ENCODE measurements at regions of chr7 and their contacts with region 1.

Region 1: GRCh38 chr7:50304158-50304910 is at the start of gene IKZF1:
- DNase-seq: no peak
- ATAC-seq: peak; percentile 41
- H3K4me3 ChIP-seq: peak within 1 kb of the TSS; percentile 79
- H3K27ac ChIP-seq: peak within 1 kb of the TSS; percentile 67
- H3K4me1 ChIP-seq: peaks cover 10% of the 10 kb centered on the region
- H3K27me3 ChIP-seq: no peaks in the 10 kb centered on the region
- CTCF ChIP-seq: no peak; a peak in 1 of 6 replicates
- EP300 ChIP-seq: no peak
- POLR2A ChIP-seq: peak; percentile 33
- RAD21 ChIP-seq: no peak
- polyA plus RNA-seq, gene IKZF1: 27.2 to 29.8 TPM

Region 2: DNA sequence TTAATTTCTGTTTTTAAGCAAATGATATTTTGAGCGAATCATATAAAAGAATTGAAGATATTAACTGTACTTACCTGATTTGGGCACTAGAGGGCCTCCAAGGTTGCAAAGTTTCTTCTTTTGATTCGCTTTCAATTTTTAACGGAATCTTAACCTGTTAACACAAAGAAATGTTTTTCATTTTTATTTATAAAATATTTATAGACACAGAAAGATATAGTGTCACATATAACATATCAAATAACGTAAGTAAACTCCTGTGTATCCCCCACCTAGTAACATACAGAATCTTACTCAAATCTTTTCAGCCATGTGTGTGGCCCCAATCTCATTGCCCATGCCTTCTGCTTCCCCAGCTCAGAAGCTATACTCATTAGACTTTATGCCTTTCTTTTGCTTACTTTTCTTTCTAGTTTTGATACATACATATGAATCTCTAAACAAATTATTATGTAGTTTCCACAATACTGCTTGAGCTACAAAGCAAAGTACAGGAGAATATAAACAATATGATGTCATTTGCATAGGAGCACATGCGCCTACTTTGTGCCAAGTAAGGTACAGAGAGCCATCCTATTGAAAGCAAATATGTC is 161.8 kb before region 1 on chr7:
- CTCF ChIA-PET with region 1: interaction called, 12 read pairs
- POLR2A ChIA-PET with region 1: interaction called, 4 read pairs
- RAD21 ChIA-PET with region 1: interaction called, 14 read pairs
- SMC1A ChIA-PET with region 1: interaction called, 25 read pairs
- in situ Hi-C with region 1: no loop called
- intact Hi-C with region 1: loop called (anchors 2 kb)
- DNase-seq: peak; percentile 24
- ATAC-seq: peak; percentile 51
- H3K4me3 ChIP-seq: no peak overlapping the region
- H3K27ac ChIP-seq: no peak overlapping the region
- H3K4me1 ChIP-seq: peaks cover 24% of the 10 kb centered on the region
- H3K27me3 ChIP-seq: no peaks in the 10 kb centered on the region; a peak in 1 of 4 replicates
- CTCF ChIP-seq: peak; percentile 55 to 61 (median 60)
- EP300 ChIP-seq: no peak
- POLR2A ChIP-seq: no peak
- RAD21 ChIP-seq: peak; percentile 85

Region 3: GRCh38 chr7:50212666-50213621 is 91.4 kb before region 1 on chr7:
- CTCF ChIA-PET with region 1: interaction called, 23 read pairs
- POLR2A ChIA-PET with region 1: no interaction called
- RAD21 ChIA-PET with region 1: interaction called, 19 read pairs
- SMC1A ChIA-PET with region 1: interaction called, 25 read pairs
- in situ Hi-C with region 1: no loop called
- intact Hi-C with region 1: no loop called
- DNase-seq: no peak
- ATAC-seq: peak; percentile 70
- H3K4me3 ChIP-seq: no peak overlapping the region
- H3K27ac ChIP-seq: no peak overlapping the region
- H3K4me1 ChIP-seq: peaks cover 9% of the 10 kb centered on the region
- H3K27me3 ChIP-seq: no peaks in the 10 kb centered on the region
- CTCF ChIP-seq: peak; percentile 20 to 47 (median 25); a peak in 3 of 6 replicates
- EP300 ChIP-seq: 0 out of 4 replicates have a peak, but pooled peaks of 1 of the 2 experiments have one; percentile 11
- POLR2A ChIP-seq: no peak
- RAD21 ChIP-seq: peak; percentile 61

Region 4: GRCh38 chr7:50293509-50294179 is 10.7 kb before region 1 on chr7:
- CTCF ChIA-PET with region 1: interaction called, 8 read pairs
- POLR2A ChIA-PET with region 1: interaction called, 17 read pairs
- RAD21 ChIA-PET with region 1: interaction called, 22 read pairs
- SMC1A ChIA-PET with region 1: interaction called, 107 read pairs
- in situ Hi-C with region 1: no loop called
- intact Hi-C with region 1: no loop called
- DNase-seq: no peak
- ATAC-seq: peak; percentile 77
- H3K4me3 ChIP-seq: 0 out of 2 replicates have a peak overlapping the region, but pooled peaks have one; percentile 3
- H3K27ac ChIP-seq: peak overlapping the region; percentile 36
- H3K4me1 ChIP-seq: peaks cover 22% of the 10 kb centered on the region
- H3K27me3 ChIP-seq: no peaks in the 10 kb centered on the region
- CTCF ChIP-seq: no peak
- EP300 ChIP-seq: peak in 1 of 2 experiments; percentile 67; a peak in 1 of 4 replicates
- POLR2A ChIP-seq: no peak
- RAD21 ChIP-seq: no peak

Region 5: DNA sequence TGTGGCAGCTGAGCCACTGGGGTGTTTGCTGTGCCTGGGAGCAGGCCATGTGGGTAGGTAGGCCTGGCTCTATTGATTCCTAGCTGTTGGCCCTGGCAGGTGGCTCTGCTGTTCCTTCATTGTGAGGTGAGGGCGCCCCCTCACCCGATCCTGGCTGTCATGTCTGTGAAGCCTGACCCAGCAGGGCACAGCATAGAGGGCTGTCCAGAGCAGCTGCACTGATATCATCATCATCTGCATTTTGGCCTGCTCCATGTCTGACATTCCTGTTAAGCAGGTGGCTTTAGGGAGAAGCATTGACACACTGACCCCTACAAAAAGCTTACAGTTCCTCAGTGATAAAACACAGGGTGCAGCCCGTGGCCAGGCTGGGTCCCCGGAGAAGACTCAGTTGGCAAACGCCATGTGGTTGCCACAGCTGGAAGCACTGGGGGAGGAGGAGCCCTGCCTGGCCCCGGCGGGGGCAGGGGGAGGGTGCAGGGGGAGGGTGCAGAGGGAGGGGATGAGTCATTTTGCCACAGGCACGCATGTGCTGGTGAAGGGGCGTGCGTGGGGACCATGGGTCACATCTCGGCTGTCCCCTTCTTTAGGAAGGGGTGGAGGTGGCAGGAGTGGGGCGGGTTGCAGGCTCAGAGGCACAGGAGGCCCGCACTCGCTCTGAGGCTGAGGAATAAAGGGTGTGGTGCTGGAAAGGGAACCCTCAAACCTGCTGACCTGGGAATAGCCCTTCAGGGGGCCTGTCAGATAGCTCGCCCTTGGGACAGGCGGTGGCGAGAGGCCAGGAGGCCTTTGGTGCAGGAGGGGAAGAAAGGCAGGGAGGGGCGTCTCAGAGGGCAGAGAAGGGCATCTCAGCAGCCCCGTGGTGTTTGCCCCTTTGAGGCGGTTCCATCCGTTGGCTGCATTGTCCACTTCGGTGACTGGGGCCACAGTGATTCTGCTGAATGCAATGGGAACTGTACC is 31.7 kb after region 1 on chr7:
- CTCF ChIA-PET with region 1: interaction called, 14 read pairs
- POLR2A ChIA-PET with region 1: interaction called, 7 read pairs
- RAD21 ChIA-PET with region 1: interaction called, 45 read pairs
- SMC1A ChIA-PET with region 1: interaction called, 91 read pairs
- in situ Hi-C with region 1: no loop called
- intact Hi-C with region 1: no loop called
- DNase-seq: no peak
- ATAC-seq: peak; percentile 13
- H3K4me3 ChIP-seq: no peak overlapping the region
- H3K27ac ChIP-seq: peak overlapping the region; percentile 75
- H3K4me1 ChIP-seq: peaks cover 75% of the 10 kb centered on the region
- H3K27me3 ChIP-seq: no peaks in the 10 kb centered on the region
- CTCF ChIP-seq: peak; percentile 4 to 30 (median 16); a peak in 3 of 6 replicates
- EP300 ChIP-seq: no peak
- POLR2A ChIP-seq: peak; percentile 45; the same call in 1 of the 2 replicates
- RAD21 ChIP-seq: peak; percentile 32; the same call in 1 of the 2 replicates

Measured in GM12878 (cell line).